Activated CD4-positive, alpha-beta T cell treated with anti-CD3 and anti-CD28 coated beads, Interleukin-2, amount 10 ng/mL, durations not matched to agents 7 days and 5 days (primary cell): ENCODE measurements at regions of chrX and their contacts with region 1.

Region 1: DNA sequence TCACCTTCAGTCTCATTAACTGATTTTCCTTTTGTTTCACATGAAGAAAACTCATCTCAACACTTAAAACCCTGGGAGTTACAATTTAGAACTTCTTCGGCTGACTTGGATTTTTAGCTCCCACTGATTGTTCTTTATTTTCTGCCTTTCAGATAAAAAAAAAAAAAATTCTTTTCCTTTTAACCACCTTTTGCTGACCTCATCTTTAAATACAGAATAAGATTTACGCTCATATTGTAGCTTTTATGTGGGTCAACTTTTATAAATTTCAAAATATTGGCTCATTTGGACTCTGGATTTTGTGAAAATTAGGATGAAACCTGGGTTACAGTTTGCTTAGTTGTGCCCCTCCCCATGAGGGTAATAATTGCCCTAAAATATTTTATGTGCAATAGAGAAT is 659.3 kb downstream of the ZNF674 start:
- DNase-seq: no peak
- H3K4me3 Mint-ChIP-seq: no peak overlapping the region
- H3K27ac Mint-ChIP-seq: no peak overlapping the region
- H3K4me1 Mint-ChIP-seq: peaks cover 7% of the 10 kb centered on the region
- H3K27me3 Mint-ChIP-seq: no peaks in the 10 kb centered on the region

Region 2: DNA sequence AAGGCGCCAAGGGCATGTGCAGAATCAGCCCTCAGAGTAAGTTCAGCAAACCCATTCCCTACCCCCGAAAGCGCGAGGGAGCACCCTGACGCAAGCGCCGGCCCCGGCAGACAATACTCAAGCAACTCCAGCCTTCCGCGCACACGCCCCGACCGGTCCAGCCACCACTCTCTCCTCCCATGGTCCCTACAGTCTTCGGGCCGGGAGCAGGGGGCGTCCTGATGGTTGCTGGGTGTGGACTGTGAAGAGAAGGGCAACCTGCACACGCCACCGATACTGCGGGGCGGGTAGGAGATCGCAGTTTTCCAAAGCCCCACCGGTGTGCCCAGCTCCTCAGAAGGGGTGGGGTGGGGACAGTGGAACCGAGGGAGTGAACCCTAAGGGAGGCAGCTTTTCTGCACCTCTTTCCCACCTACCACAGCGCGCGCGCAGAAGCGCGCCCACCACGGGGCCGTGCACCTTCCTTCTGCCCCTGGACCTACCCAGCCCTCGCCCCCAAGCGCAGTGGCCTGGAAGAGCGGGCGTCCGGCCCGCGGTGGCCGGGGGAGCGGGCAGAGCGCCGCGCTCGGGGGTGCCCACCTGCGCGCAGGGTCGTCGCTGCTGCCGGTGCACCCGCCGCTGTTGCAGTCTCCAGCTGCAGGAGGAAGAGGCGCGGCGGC is 35.0 kb before region 1 on chrX:
- CTCF ChIA-PET with region 1: no interaction called
- POLR2A ChIA-PET with region 1: interaction called, 19 read pairs
- DNase-seq: peak; percentile 23
- H3K4me3 Mint-ChIP-seq: peak overlapping the region; percentile 94
- H3K27ac Mint-ChIP-seq: peak overlapping the region; percentile 90
- H3K4me1 Mint-ChIP-seq: peaks cover 38% of the 10 kb centered on the region
- H3K27me3 Mint-ChIP-seq: no peaks in the 10 kb centered on the region

Region 3: DNA sequence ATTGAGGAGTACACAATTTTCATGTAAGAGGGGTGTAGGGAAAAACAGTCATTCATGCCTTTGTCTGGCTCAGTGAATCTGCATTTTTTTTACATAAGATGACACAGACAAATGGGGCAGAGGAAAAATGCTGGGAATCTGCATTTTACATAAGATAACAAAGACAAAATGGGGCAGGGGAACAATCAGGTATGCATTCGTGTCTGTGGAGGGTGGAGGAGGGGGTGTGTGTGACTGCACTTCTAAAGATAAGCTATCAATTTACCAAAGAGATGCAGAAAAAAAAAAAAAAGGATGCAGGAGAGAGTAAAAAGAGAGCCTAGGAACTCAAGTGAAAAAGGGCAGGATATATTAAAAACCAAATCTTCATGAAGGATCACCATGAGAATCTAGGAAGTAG is 21.9 kb after region 1 on chrX:
- CTCF ChIA-PET with region 1: no interaction called
- POLR2A ChIA-PET with region 1: no interaction called
- DNase-seq: no peak
- H3K4me3 Mint-ChIP-seq: no peak overlapping the region
- H3K27ac Mint-ChIP-seq: no peak overlapping the region
- H3K4me1 Mint-ChIP-seq: peaks cover 8% of the 10 kb centered on the region
- H3K27me3 Mint-ChIP-seq: no peaks in the 10 kb centered on the region